Prostate gland (tissue), 2 donors: ENCODE measurements at regions of chr1 and their contacts with region 1.

Region 1: GRCh38 chr1:113978863-113979702 is at the start of gene OLFML3:
- DNase-seq: peak; percentile 81
- H3K4me3 ChIP-seq: peak within 1 kb of the TSS; percentile 1 to 9
- H3K27ac ChIP-seq: peak within 1 kb of the TSS; percentile 25 to 55
- H3K4me1 ChIP-seq: no peaks in the 10 kb centered on the region
- H3K27me3 ChIP-seq: no peaks in the 10 kb centered on the region
- CTCF ChIP-seq: peak; percentile 43 to 82 (median 69)
- POLR2A ChIP-seq: no peak
- total RNA-seq, gene OLFML3: 15.8 to 25.1 TPM

Region 2: DNA sequence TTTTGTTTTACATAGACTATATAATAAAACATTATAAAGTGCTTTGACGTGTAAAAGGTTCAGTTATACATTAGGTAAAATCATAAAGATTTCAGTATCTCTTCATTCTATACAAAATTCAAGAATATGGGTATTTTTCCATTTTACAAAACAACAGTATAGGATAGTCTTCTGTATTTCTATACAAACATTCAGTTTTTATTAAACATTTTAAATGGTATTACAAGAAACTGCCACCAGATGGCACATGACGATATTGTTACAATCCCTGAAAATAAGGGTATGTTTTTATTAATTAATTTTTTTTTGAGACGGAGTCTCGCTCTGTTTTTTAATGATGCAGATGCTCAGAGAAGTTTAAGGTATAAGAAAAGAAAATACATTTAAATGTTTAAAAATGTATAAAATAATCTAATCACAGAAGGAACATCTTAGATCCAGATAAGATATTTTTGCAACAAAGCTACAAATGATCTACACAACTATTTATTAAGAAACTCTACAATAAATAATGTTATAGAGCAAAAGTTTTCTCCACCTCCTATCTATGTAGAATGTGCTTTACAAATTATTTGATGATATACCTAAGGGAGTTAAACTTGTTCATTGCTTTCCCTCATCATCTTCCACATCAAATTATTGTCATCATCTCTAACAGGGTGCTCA is 143.3 kb before region 1 on chr1:
- intact Hi-C with region 1: loop called (anchors 10 kb)
- DNase-seq: no peak
- H3K4me3 ChIP-seq: no peak overlapping the region
- H3K27ac ChIP-seq: no peak overlapping the region
- H3K4me1 ChIP-seq: no peaks in the 10 kb centered on the region
- H3K27me3 ChIP-seq: no peaks in the 10 kb centered on the region
- CTCF ChIP-seq: peak; percentile 28 to 73 (median 68)
- POLR2A ChIP-seq: no peak

Region 3: GRCh38 chr1:114062477-114063099 is 83.5 kb after region 1 on chr1:
- intact Hi-C with region 1: no loop called
- DNase-seq: no peak
- H3K4me3 ChIP-seq: no peak overlapping the region
- H3K27ac ChIP-seq: no peak overlapping the region
- H3K4me1 ChIP-seq: no peaks in the 10 kb centered on the region
- H3K27me3 ChIP-seq: no peaks in the 10 kb centered on the region
- CTCF ChIP-seq: no peak
- POLR2A ChIP-seq: no peak

Region 4: GRCh38 chr1:114152508-114153260 is 173.6 kb after region 1 on chr1:
- intact Hi-C with region 1: loop called (anchors 5 kb)
- DNase-seq: peak; percentile 10
- H3K4me3 ChIP-seq: peak overlapping the region; percentile 27 to 40
- H3K27ac ChIP-seq: no peak overlapping the region
- H3K4me1 ChIP-seq: peaks cover 7% of the 10 kb centered on the region
- H3K27me3 ChIP-seq: peaks cover 11% of the 10 kb centered on the region
- CTCF ChIP-seq: no peak
- POLR2A ChIP-seq: no peak

Region 5: GRCh38 chr1:114219172-114219868 is 240.2 kb after region 1 on chr1:
- intact Hi-C with region 1: loop called (anchors 2 kb)
- DNase-seq: no peak
- H3K4me3 ChIP-seq: no peak overlapping the region
- H3K27ac ChIP-seq: no peak overlapping the region
- H3K4me1 ChIP-seq: no peaks in the 10 kb centered on the region
- H3K27me3 ChIP-seq: no peaks in the 10 kb centered on the region
- CTCF ChIP-seq: no peak
- POLR2A ChIP-seq: no peak

Region 6: GRCh38 chr1:114250683-114251572 is 271.8 kb after region 1 on chr1:
- intact Hi-C with region 1: no loop called
- DNase-seq: no peak
- H3K4me3 ChIP-seq: no peak overlapping the region
- H3K27ac ChIP-seq: no peak overlapping the region
- H3K4me1 ChIP-seq: no peaks in the 10 kb centered on the region
- H3K27me3 ChIP-seq: no peaks in the 10 kb centered on the region
- CTCF ChIP-seq: no peak
- POLR2A ChIP-seq: no peak

Region 7: GRCh38 chr1:114282751-114283403 is 303.8 kb after region 1 on chr1:
- intact Hi-C with region 1: loop called (anchors 2 kb)
- DNase-seq: peak; percentile 78
- H3K4me3 ChIP-seq: no peak overlapping the region
- H3K27ac ChIP-seq: no peak overlapping the region
- H3K4me1 ChIP-seq: no peaks in the 10 kb centered on the region
- H3K27me3 ChIP-seq: no peaks in the 10 kb centered on the region
- CTCF ChIP-seq: peak; percentile 57 to 81 (median 75)
- POLR2A ChIP-seq: no peak

Region 8: DNA sequence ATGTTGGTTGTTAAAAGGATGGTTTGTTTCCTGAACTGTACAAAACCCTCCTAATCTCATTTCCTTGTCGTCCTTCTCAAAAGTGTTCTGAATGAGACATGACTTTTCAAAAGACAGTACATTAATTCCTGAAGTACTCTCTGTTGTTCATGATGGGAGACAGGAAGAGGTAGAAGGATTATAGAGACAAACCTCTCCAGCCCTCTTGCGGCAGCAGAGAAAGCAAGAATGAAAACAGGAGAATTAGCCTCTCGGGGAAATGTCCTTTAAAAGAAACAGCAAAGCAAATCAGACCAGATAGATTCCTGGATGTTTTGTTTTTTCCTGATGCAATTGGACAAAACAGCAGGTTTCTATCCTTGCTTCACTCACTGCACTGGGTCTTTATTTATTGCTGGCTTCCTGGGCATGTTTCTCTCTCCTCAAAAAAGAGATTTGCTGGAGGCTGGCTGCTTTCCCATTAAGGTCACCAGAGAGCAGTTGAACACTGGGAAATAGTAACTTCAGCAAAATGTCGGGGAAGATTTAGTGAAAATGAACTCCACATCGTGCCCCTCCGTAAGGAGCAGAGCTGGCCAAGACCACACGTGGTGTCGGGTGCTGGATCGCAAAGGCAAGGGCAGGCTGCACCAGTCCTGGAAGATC is 320.4 kb after region 1 on chr1:
- intact Hi-C with region 1: loop called (anchors 5 kb)
- DNase-seq: no peak
- H3K4me3 ChIP-seq: no peak overlapping the region
- H3K27ac ChIP-seq: no peak overlapping the region
- H3K4me1 ChIP-seq: no peaks in the 10 kb centered on the region
- H3K27me3 ChIP-seq: no peaks in the 10 kb centered on the region
- CTCF ChIP-seq: no peak
- POLR2A ChIP-seq: no peak

Region 9: DNA sequence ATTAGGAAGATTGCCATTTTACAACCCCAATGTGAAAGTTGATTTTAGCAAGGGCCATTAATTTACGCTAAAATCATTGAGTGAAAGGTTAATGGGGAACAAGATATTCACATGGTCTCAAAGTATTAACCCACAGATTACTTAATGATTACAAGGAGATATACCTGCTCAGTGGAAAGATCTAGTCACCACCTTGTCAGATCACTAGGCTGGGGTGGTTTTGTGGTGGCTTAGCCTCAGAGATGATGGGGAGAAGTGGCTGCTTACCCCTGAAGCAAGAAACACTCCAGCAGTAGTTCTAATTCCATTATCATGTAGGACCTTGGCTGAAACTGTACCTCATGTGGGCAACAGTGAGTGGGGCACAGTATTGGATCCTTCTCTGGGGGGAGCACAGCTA is 552.0 kb after region 1 on chr1:
- intact Hi-C with region 1: no loop called
- DNase-seq: no peak
- H3K4me3 ChIP-seq: no peak overlapping the region
- H3K27ac ChIP-seq: no peak overlapping the region
- H3K4me1 ChIP-seq: no peaks in the 10 kb centered on the region
- H3K27me3 ChIP-seq: no peaks in the 10 kb centered on the region
- CTCF ChIP-seq: no peak
- POLR2A ChIP-seq: no peak